ENCODE measurements at regions of chr15 and their contacts with region 1.

Region 1: GRCh38 chr15:22949074-22949547 is 31.1 kb downstream of the CYFIP1 start:
- DNase-seq: peak; percentile 80
- H3K4me3 ChIP-seq: peak overlapping the region in 2 of 3 experiments; percentile 20 to 25
- H3K27ac ChIP-seq: no peak overlapping the region
- H3K4me1 ChIP-seq: peaks cover 53% of the 10 kb centered on the region
- H3K27me3 ChIP-seq: no peaks in the 10 kb centered on the region
- CTCF ChIP-seq: no peak

Region 2: DNA sequence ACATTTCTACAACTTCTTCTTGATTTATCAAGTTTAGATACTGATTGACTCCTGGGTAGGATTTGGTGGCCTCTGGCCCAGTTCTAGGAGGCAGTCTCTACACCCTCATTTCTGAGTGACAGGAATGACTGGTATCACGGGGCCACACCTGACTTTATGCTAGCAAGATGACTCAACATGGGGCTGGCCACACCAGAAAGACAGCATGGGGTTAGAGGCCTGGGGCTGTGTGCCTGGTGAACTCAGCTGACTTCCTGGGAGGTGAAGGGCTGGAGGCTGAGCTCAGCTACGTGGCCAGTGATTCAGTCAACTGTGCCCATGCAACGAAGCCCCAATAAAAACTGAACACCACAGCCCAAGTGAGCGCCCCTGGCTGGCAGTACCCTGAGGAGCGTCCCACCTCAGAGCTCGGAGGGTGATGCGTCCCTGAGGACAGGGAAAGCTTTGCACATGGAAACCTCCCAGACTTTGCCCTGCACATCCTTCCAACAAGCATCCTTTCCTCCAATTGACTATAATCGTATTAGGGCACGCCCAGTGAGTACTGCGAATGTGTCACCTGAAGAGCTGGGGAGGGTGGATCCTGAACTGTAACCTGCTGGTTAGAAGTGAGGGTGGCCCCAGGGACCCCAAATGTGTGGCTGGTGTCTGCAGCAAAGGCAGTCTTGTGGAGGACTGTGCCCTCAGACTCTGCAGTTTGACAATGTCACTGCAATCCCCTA is 53.5 kb before region 1 on chr15:
- CTCF ChIA-PET with region 1: no interaction called
- dilution Hi-C with region 1: no loop called
- in situ Hi-C with region 1: loop called in 1 of 2 experiments (anchors 10 kb)
- intact Hi-C with region 1: no loop called
- DNase-seq: peak; percentile 96
- H3K4me3 ChIP-seq: no peak overlapping the region
- H3K27ac ChIP-seq: peak overlapping the region; percentile 52
- H3K4me1 ChIP-seq: peaks cover 12% of the 10 kb centered on the region
- H3K27me3 ChIP-seq: no peaks in the 10 kb centered on the region
- CTCF ChIP-seq: peak; percentile 6 to 7

Region 3: DNA sequence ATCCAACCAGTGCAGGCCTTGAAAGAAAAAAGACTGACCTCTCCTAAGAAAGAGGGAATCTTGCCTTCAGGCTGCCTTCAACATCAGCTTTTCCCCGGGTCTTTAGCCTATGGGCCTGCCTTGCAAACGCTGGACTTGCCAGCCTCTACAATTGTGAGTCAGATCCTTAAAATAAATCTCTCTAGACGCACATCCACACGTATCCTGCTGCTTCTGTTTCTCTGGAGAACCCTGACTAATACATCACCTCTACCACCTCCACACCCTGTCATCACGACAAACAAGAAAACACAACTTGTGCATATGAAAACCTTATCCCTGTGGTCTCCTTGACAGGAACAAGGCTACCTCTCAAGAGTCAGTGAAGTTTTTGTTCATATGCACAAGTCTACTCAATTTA is 19.3 kb after region 1 on chr15:
- CTCF ChIA-PET with region 1: no interaction called
- dilution Hi-C with region 1: no loop called
- in situ Hi-C with region 1: no loop called
- intact Hi-C with region 1: loop called (anchors 2 kb)
- DNase-seq: peak; percentile 89
- H3K4me3 ChIP-seq: no peak overlapping the region
- H3K27ac ChIP-seq: peak overlapping the region; percentile 51
- H3K4me1 ChIP-seq: peaks cover 30% of the 10 kb centered on the region
- H3K27me3 ChIP-seq: no peaks in the 10 kb centered on the region
- CTCF ChIP-seq: no peak

Region 4: GRCh38 chr15:23014394-23015000 is 65.4 kb after region 1 on chr15:
- CTCF ChIA-PET with region 1: no interaction called
- dilution Hi-C with region 1: no loop called
- in situ Hi-C with region 1: loop called in 1 of 2 experiments (anchors 10 kb)
- intact Hi-C with region 1: no loop called
- DNase-seq: no peak
- H3K4me3 ChIP-seq: no peak overlapping the region
- H3K27ac ChIP-seq: no peak overlapping the region
- H3K4me1 ChIP-seq: no peaks in the 10 kb centered on the region
- H3K27me3 ChIP-seq: no peaks in the 10 kb centered on the region
- CTCF ChIP-seq: no peak

Region 5: GRCh38 chr15:23467110-23467600 is 518.0 kb after region 1 on chr15:
- CTCF ChIA-PET with region 1: no interaction called
- dilution Hi-C with region 1: no loop called
- in situ Hi-C with region 1: no loop called
- intact Hi-C with region 1: loop called (anchors 10 kb)
- DNase-seq: peak; percentile 1
- H3K4me3 ChIP-seq: no peak overlapping the region
- H3K27ac ChIP-seq: no peak overlapping the region
- H3K4me1 ChIP-seq: no peaks in the 10 kb centered on the region
- H3K27me3 ChIP-seq: no peaks in the 10 kb centered on the region
- CTCF ChIP-seq: peak in 1 of 2 donors; percentile 32

Measured in mammary epithelial cell (primary cell).